Thyroid gland (tissue), 4 donors: ENCODE measurements at regions of chr16 and their contacts with region 1.

Region 1: GRCh38 chr16:77788181-77789084 is at the start of gene VAT1L:
- DNase-seq: peak; percentile 32 to 53
- H3K4me3 ChIP-seq: peak within 1 kb of the TSS; percentile 30 to 49 (median 40)
- H3K27ac ChIP-seq: peak within 1 kb of the TSS in 1 of 3 donors; percentile 12
- H3K4me1 ChIP-seq: peaks cover 0 to 15% of the 10 kb centered on the region in 2 donors
- H3K27me3 ChIP-seq: no peaks in the 10 kb centered on the region
- CTCF ChIP-seq: no peak
- POLR2A ChIP-seq: peak in 1 of 2 donors; percentile 61
- total RNA-seq, gene VAT1L: 1.9 to 29.7 (median 9.2) TPM

Region 2: GRCh38 chr16:77711775-77712174 is 76.7 kb before region 1 on chr16:
- intact Hi-C with region 1: no loop called
- DNase-seq: no peak
- H3K4me3 ChIP-seq: no peak overlapping the region
- H3K27ac ChIP-seq: no peak overlapping the region
- H3K4me1 ChIP-seq: no peaks in the 10 kb centered on the region
- H3K27me3 ChIP-seq: no peaks in the 10 kb centered on the region
- CTCF ChIP-seq: no peak
- POLR2A ChIP-seq: no peak

Region 3: DNA sequence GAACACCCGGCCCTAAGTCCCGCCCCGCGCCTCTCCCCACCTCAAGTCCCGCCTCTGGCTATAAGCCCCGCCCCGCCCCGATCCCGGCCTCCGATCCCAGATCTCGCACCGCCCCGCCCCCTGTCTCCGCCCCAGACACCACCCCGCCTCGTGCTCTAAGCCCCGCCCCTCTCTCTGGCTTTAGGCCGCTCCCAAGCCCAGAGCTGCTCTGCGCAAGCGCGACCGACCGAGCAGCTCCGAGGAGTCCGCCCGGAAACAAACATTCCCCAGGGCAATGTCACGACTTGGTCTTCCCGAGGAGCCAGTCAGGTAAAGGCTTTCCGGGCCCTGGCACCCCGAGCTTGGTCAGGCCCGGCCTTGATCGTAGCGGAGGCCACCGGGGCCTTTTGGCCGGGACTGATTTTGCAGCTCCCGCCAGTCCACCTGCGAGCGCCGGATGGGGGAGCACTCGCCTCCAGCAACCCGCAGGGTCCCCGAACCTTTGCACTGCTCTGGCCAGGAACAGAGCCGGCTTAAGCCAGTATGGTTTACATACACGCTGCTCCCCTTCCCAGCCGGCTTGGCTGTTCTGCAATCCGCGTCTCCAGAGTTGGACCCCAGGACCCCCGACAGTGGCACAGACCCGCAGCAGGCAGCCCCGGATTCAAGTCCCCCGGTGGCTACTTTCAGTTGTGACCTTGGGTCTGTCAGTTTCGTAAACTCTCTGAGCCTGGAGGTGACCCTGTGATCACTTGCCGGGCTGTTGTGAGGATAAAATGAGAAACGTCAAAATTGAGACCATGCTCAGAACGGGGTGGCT is 65.9 kb before region 1 on chr16 and contains the start of gene NUDT7:
- intact Hi-C with region 1: loop called (anchors 10 kb)
- DNase-seq: peak; percentile 99
- H3K4me3 ChIP-seq: peak within 1 kb of the TSS; percentile 17 to 85 (median 50)
- H3K27ac ChIP-seq: peak within 1 kb of the TSS; percentile 66 to 88 (median 81)
- H3K4me1 ChIP-seq: peaks cover 6 to 10% of the 10 kb centered on the region in 2 donors
- H3K27me3 ChIP-seq: no peaks in the 10 kb centered on the region
- CTCF ChIP-seq: peak in 5 of 6 experiments; percentile 11 to 44 (median 32)
- POLR2A ChIP-seq: peak; percentile 45 to 92
- total RNA-seq, gene NUDT7: 13.4 to 27.2 (median 19.4) TPM

Region 4: DNA sequence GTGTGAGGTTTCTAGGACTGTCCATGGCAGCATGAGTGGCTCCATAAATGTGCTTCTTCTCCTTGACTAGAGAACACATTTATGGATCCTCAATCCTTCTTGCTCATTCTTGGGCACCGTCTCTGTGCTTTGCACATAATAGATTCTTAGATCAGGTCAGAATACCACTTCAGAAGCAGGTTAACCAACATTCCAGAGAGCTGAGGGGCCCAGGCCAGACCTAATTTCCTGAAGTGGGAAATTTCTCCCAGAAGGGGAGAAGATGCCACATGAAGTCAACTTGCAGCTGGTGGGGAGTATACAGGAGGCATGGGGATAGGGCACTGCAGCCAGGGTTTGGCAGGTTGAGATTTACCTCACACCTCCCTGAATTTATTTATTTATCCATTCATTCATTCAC is 24.4 kb before region 1 on chr16:
- intact Hi-C with region 1: no loop called
- DNase-seq: peak; percentile 49 to 58
- H3K4me3 ChIP-seq: no peak overlapping the region
- H3K27ac ChIP-seq: peak overlapping the region; percentile 82 to 95 (median 85)
- H3K4me1 ChIP-seq: peaks cover 44 to 50% of the 10 kb centered on the region in 2 donors
- H3K27me3 ChIP-seq: no peaks in the 10 kb centered on the region
- CTCF ChIP-seq: no peak
- POLR2A ChIP-seq: no peak

Region 5: DNA sequence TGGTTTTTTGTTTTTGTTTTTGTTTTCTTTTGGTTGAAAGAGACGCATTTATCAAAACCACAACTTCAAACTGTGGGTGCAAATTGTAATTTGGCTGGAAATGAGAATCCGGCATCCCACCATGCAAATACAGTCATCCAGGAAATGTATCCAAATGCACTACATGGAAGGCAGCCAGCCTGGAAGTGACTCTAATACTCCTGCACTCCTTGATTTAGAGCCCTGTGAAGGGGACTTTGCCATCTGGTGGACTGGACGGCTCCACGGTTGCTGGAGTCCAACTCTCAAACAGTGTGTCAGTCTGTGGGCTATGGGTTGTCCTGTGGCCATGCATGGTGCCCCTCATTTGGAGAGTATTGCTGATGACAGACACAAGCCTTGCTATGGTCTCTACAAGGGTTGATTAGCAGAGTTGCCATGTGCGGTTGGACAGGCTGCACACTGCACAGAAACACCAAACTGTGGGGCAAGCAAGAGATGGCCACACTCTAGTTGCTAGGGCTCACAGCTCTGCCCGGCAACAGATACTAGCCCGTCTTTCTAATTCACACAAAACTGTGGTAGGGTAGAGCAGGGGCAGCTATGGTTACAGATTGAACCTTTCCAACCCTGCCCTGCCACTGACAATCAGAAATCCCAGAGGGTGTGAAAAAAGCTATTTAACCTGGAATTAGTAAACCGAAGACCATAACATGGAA is 62.4 kb after region 1 on chr16:
- intact Hi-C with region 1: no loop called
- DNase-seq: no peak
- H3K4me3 ChIP-seq: no peak overlapping the region
- H3K27ac ChIP-seq: no peak overlapping the region
- H3K4me1 ChIP-seq: peaks cover 6 to 11% of the 10 kb centered on the region in 2 donors
- H3K27me3 ChIP-seq: no peaks in the 10 kb centered on the region
- CTCF ChIP-seq: no peak
- POLR2A ChIP-seq: no peak

Region 6: GRCh38 chr16:77918809-77919707 is 130.6 kb after region 1 on chr16:
- intact Hi-C with region 1: no loop called
- DNase-seq: peak; percentile 20 to 29
- H3K4me3 ChIP-seq: no peak overlapping the region
- H3K27ac ChIP-seq: no peak overlapping the region
- H3K4me1 ChIP-seq: peaks cover 9% of the 10 kb centered on the region in 2 donors
- H3K27me3 ChIP-seq: no peaks in the 10 kb centered on the region
- CTCF ChIP-seq: no peak
- POLR2A ChIP-seq: no peak

Region 7: DNA sequence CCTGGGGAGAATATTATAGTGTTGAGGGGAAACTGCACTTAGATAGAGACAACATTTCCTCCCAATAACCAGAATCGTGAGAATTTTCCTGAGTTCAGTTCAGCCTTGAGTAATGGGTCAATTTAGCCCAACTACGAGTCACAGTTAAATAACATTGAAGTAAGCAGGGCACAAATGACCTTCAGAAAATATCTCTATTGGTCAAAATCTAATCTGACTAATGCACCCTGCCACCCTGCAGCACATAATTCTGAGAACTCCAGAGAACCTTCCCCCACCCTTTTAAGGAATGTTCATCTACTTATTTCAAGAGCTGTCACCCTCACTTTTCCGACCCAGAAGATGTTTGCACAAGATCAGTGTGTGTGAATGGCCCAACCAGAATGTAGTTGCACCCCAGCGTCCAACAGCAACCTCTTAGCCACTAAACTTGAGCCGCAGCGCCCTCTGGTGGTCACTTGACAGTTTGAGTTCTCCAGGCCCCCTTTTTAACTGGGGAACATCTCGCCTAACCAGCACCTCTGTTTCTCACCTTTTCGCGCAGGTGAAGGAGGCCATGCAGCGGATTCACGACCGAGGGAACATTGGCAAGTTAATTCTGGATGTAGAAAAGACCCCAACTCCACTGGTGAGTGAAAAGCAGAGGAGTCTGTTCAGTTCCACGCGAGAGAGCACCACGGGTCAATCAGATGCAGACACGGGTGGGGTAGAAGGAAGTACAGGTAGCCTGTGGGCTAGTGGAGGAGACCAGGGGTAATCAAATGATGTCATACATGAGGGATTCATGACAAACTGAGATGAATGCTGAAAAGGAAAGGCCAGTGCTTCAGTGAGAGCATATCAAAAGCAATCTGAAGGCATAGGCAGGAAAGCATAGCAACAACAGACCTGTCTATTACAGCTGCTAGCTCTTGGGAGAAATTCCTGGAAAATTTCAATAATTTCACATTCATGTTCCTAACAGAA is 183.2 kb after region 1 on chr16:
- intact Hi-C with region 1: loop called (anchors 10 kb)
- DNase-seq: peak; percentile 86 to 92
- H3K4me3 ChIP-seq: no peak overlapping the region
- H3K27ac ChIP-seq: peak overlapping the region in 1 of 3 donors; percentile 34
- H3K4me1 ChIP-seq: peaks cover 0 to 6% of the 10 kb centered on the region in 2 donors
- H3K27me3 ChIP-seq: no peaks in the 10 kb centered on the region
- CTCF ChIP-seq: peak; percentile 73 to 88 (median 80)
- POLR2A ChIP-seq: no peak